PC-3 (cell line): ENCODE measurements at regions of chr16 and their contacts with region 1.

Region 1: DNA sequence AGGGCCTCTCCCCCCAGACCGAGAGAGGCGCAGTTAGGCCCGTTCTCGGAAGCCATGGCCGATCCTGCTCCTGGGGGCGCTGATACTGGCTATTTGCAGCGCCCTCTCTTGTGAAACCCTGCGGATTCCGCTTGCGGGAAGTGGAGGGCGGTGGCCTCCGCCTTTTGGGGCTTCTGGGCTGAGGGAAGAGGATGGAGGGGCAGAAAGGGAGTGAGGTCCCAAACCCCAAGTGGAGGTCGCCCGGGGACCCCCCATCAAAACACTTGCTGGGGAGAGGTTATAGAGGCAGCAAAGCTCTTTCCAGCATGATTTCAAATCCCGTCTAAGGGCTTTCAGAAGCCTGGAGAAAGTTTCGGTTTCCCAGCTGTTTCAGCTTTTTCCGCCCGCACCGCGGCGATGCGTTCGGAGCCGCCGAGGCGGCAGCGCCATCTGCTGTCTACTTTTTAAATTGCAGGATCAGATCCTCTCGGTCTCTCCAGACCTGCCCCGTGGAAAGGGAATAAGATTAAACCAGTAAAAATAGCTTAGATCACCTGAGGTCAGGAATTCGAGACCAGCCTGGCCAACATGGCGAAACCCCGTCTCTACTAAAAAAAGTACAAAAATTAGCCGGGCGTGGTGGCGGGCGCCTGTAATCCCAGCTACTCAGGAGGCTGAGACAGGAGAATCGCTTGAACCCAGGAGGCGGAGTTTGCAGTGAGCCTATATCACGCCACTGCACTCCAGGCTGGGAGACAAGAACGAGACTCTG is 15.8 kb downstream of the SNX20 start:
- DNase-seq: peak; percentile 79
- ATAC-seq: peak; percentile 79
- H3K4me3 ChIP-seq: peak overlapping the region; percentile 64
- H3K27ac ChIP-seq: no peak overlapping the region
- H3K4me1 ChIP-seq: no peaks in the 10 kb centered on the region
- H3K27me3 ChIP-seq: no peaks in the 10 kb centered on the region
- CTCF ChIP-seq: peak; percentile 70

Region 2: GRCh38 chr16:50024684-50025536 is 640.4 kb before region 1 on chr16 and contains the start of gene CNEP1R1:
- CTCF ChIA-PET with region 1: no interaction called
- POLR2A ChIA-PET with region 1: no interaction called
- intact Hi-C with region 1: loop called (anchors 1 kb)
- DNase-seq: peak; percentile 93
- ATAC-seq: peak; percentile 93
- H3K4me3 ChIP-seq: peak within 1 kb of the TSS; percentile 95
- H3K27ac ChIP-seq: no peak within 1 kb of the TSS
- H3K4me1 ChIP-seq: peaks cover 6% of the 10 kb centered on the region
- H3K27me3 ChIP-seq: 0 out of 2 replicates have a peak, but pooled peaks cover 4% of the 10 kb centered on the region
- CTCF ChIP-seq: peak; percentile 91
- total RNA-seq, gene CNEP1R1: 7.0 and 10.5 TPM in 2 replicates

Region 3: DNA sequence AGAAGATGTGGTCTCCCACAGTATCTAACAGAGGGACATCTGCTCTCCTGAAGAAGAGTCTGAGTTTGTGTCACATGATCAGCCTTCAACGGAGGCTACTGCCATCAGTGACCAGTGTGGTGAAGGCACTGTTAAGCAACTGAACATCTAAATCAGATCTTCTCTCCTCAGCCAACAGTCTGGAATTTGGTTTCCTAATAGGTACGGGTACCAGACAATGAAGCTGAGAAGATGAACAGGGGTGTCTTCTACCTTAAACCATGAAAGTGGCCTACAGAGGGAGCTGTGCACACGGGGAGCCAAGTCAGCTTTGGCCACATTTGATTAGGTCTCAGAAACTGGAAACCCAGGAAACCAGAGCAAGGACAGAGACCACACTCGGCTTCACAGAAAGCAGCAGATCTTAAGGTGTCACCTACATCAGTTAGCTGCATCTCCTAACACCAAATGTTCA is 338.3 kb before region 1 on chr16:
- CTCF ChIA-PET with region 1: no interaction called
- POLR2A ChIA-PET with region 1: no interaction called
- intact Hi-C with region 1: loop called (anchors 1 kb)
- DNase-seq: peak; percentile 58
- ATAC-seq: peak; percentile 68; the same call in 1 of the 2 replicates
- H3K4me3 ChIP-seq: no peak overlapping the region
- H3K27ac ChIP-seq: no peak overlapping the region
- H3K4me1 ChIP-seq: no peaks in the 10 kb centered on the region
- H3K27me3 ChIP-seq: no peaks in the 10 kb centered on the region
- CTCF ChIP-seq: peak; percentile 67

Region 4: GRCh38 chr16:50747207-50747956 is 82.1 kb after region 1 on chr16:
- CTCF ChIA-PET with region 1: no interaction called
- POLR2A ChIA-PET with region 1: no interaction called
- intact Hi-C with region 1: loop called (anchors 5 kb)
- DNase-seq: peak; percentile 39
- ATAC-seq: peak; percentile 18; the same call in 1 of the 2 replicates
- H3K4me3 ChIP-seq: no peak overlapping the region
- H3K27ac ChIP-seq: no peak overlapping the region
- H3K4me1 ChIP-seq: peaks cover 26% of the 10 kb centered on the region
- H3K27me3 ChIP-seq: no peaks in the 10 kb centered on the region
- CTCF ChIP-seq: peak; percentile 58; the same call in 1 of the 2 replicates

Region 5: GRCh38 chr16:50806099-50807062 is 141.1 kb after region 1 on chr16:
- CTCF ChIA-PET with region 1: interaction called, 21 read pairs
- POLR2A ChIA-PET with region 1: no interaction called
- intact Hi-C with region 1: loop called (anchors 1 kb)
- DNase-seq: peak; percentile 84
- ATAC-seq: peak; percentile 95
- H3K4me3 ChIP-seq: peak overlapping the region; percentile 65
- H3K27ac ChIP-seq: no peak overlapping the region
- H3K4me1 ChIP-seq: no peaks in the 10 kb centered on the region
- H3K27me3 ChIP-seq: no peaks in the 10 kb centered on the region
- CTCF ChIP-seq: peak; percentile 86